Right cardiac atrium (tissue), 5 donors: ENCODE measurements at regions of chr3 and their contacts with region 1.

Region 1: DNA sequence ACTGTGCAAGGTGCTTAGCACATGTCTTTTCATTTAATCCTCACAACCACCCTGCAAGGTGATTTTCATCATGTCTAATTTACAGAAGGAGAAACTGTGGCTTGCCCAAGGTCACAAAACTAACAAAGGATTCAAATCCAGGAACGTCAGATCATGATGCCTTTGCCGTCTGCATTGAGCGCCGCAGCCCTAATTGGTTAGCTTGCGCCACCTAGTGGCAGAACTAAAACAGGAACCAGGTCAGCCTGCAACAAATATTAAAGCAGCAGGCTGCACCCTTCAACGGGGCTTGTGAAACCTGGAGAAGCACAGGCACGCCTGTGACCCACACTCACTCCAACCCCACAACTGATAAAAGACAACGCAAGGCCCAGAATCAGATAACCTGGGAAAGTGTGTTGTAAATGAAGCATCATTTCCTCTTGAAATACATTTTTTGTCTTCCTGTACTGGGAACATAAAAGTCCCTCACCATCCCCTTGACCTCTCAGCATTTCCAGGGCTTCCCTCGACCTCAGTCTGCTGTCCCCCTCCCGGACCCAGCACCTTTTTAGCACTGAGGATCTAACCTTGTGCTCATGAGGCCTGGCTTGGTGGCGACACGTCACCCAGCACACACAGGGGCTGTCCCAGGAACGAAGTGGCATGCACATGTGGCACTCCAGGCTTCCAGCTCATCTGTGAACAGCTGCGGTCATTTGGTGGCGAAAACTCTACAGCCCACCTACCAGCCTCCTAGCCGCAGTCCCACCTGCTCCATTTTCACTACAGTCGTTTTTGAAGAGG is 17.3 kb downstream of the DPH3 start:
- DNase-seq: peak; percentile 71 to 89 (median 85)
- ATAC-seq: peak; percentile 58 to 75
- H3K4me3 ChIP-seq: no peak overlapping the region
- H3K27ac ChIP-seq: no peak overlapping the region
- H3K4me1 ChIP-seq: peaks cover 3% of the 10 kb centered on the region
- H3K27me3 ChIP-seq: no peaks in the 10 kb centered on the region

Region 2: GRCh38 chr3:15629860-15630597 is 617.4 kb before region 1 on chr3:
- intact Hi-C with region 1: loop called in 2 of 4 experiments (anchors 10 kb)
- DNase-seq: no peak
- ATAC-seq: peak; percentile 93 to 95
- H3K4me3 ChIP-seq: peak overlapping the region; percentile 36
- H3K27ac ChIP-seq: no peak overlapping the region
- H3K4me1 ChIP-seq: peaks cover 2% of the 10 kb centered on the region
- H3K27me3 ChIP-seq: no peaks in the 10 kb centered on the region

Region 3: GRCh38 chr3:15815696-15816095 is 431.8 kb before region 1 on chr3:
- intact Hi-C with region 1: loop called (anchors 5 to 10 kb)
- DNase-seq: no peak
- ATAC-seq: no peak
- H3K4me3 ChIP-seq: no peak overlapping the region
- H3K27ac ChIP-seq: no peak overlapping the region
- H3K4me1 ChIP-seq: no peaks in the 10 kb centered on the region
- H3K27me3 ChIP-seq: no peaks in the 10 kb centered on the region

Region 4: GRCh38 chr3:16048435-16049318 is 198.8 kb before region 1 on chr3:
- intact Hi-C with region 1: loop called (anchors 2 to 5 kb)
- DNase-seq: peak in 1 of 3 donors; percentile 54
- ATAC-seq: peak; percentile 90 to 92
- H3K4me3 ChIP-seq: no peak overlapping the region
- H3K27ac ChIP-seq: no peak overlapping the region
- H3K4me1 ChIP-seq: peaks cover 5% of the 10 kb centered on the region
- H3K27me3 ChIP-seq: no peaks in the 10 kb centered on the region

Region 5: DNA sequence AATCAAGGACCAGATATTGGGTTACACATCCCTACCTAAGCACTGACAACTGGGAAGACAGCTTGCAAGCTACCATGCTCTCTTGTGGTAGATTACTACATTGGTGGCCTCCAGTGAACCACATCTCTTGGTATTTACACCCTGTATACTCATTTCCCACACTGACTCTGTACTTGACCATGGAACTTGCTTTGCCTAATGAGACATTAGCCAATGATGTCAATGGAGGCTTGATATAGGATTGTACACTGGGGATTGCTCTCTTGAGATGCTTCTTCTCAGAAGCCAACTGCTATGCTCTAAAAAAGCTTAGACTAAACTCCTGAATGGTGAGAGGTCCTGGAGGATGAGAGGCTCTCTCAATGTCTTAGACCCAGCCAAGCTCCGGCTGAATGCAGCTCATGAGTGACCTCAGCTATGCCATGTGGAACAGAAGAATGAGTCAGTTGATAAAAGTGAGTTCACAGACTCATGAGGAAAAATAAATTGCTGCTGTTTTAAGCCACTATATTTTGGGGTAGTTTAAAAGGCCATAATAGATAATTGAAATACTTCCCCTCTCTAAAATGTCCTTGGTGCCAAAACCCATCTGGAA is 134.5 kb before region 1 on chr3:
- intact Hi-C with region 1: no loop called
- DNase-seq: peak in 1 of 3 donors; percentile 41
- ATAC-seq: peak; percentile 56 to 71
- H3K4me3 ChIP-seq: no peak overlapping the region
- H3K27ac ChIP-seq: no peak overlapping the region
- H3K4me1 ChIP-seq: no peaks in the 10 kb centered on the region
- H3K27me3 ChIP-seq: no peaks in the 10 kb centered on the region

Region 6: GRCh38 chr3:16177962-16178627 is 69.4 kb before region 1 on chr3:
- intact Hi-C with region 1: loop called in 2 of 4 experiments (anchors 5 kb)
- DNase-seq: peak; percentile 86 to 94 (median 93)
- ATAC-seq: peak; percentile 73 to 80
- H3K4me3 ChIP-seq: peak overlapping the region; percentile 34
- H3K27ac ChIP-seq: no peak overlapping the region
- H3K4me1 ChIP-seq: peaks cover 10% of the 10 kb centered on the region
- H3K27me3 ChIP-seq: no peaks in the 10 kb centered on the region

Region 7: DNA sequence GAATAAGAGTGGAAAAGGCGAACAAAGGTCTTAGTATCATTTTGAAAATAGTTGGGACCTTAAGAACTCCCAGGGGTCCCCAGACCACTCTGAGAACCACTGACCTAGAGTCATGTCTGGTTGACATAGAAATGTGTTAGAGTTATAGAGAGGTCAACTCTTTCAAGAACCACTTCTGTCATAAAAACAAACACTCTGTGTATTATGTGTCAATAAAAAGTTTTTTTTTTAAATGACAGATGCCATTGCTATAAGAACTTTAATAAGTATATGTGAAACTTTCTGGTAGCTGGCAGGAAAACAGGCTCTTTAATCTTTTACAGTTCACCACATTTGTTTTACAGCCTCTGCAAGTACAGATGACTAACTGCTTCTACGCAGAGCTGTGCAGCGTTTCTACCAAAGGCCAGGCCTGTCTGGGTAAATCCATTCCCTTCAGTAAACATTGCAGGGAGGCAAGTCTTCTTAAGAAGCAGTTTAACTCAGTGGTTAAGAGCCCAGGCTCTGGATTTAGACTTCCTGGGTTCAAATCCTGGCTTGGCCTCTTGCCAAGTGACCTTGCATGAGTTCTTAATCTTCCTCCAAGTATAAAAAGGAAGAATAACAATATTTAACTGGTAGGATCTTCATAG is 209.4 kb after region 1 on chr3:
- intact Hi-C with region 1: no loop called
- DNase-seq: no peak
- ATAC-seq: peak; percentile 32 to 41
- H3K4me3 ChIP-seq: no peak overlapping the region
- H3K27ac ChIP-seq: no peak overlapping the region
- H3K4me1 ChIP-seq: peaks cover 2% of the 10 kb centered on the region
- H3K27me3 ChIP-seq: no peaks in the 10 kb centered on the region